Activated CD8-positive, alpha-beta T cell treated with anti-CD3 and anti-CD28 coated beads, Interleukin-2, amount 10 ng/mL, durations not matched to agents 7 days and 5 days (primary cell): ENCODE measurements at regions of chrX and their contacts with region 1.

Region 1: DNA sequence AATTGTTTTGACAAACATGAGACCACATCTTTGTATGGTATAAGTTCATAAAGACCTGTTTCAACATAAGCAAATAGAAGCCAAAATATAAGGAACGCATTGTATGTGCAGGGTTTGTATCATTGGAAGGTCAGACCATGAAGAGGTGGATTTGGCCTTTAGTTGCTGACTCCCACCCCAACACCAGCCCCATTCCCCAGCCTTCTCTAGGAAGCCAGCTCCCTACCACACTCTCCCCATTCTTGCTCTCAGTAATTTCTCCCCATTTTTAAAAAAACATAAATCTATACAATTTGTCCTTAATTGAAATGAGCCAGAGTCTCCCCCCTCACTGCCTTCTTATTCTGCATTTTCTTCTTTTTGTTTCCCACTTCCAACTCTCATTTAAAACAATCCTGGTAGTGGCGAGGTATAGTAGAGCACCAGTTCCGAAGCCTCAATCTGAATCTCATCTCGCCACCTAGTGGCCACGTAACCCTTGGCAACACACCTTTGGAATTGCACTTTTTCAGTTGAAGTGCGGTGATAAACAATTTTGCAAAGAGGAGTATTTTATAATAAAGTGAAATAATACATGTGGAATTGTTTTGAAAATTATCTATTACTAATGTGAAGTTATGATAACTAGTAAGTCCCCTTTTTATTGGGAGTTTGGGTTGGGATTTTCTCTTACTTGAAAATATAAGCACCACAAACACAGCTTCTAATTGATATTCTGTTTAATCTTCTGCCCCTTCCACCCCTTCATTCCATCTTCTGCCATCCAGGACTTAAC is 126.6 kb downstream of the ASB9 start:
- DNase-seq: peak; percentile 68
- ATAC-seq: peak; percentile 85
- H3K4me3 Mint-ChIP-seq: peak overlapping the region; percentile 3
- H3K27ac Mint-ChIP-seq: peak overlapping the region; percentile 90
- H3K4me1 Mint-ChIP-seq: peaks cover 21% of the 10 kb centered on the region
- H3K27me3 Mint-ChIP-seq: no peaks in the 10 kb centered on the region

Region 2: GRCh38 chrX:15107367-15107988 is 35.8 kb before region 1 on chrX:
- CTCF ChIA-PET with region 1: interaction called, 30 read pairs
- POLR2A ChIA-PET with region 1: no interaction called
- DNase-seq: peak; percentile 21
- ATAC-seq: peak; percentile 68
- H3K4me3 Mint-ChIP-seq: no peak overlapping the region
- H3K27ac Mint-ChIP-seq: no peak overlapping the region
- H3K4me1 Mint-ChIP-seq: peaks cover 17% of the 10 kb centered on the region
- H3K27me3 Mint-ChIP-seq: peaks cover 10% of the 10 kb centered on the region

Region 3: DNA sequence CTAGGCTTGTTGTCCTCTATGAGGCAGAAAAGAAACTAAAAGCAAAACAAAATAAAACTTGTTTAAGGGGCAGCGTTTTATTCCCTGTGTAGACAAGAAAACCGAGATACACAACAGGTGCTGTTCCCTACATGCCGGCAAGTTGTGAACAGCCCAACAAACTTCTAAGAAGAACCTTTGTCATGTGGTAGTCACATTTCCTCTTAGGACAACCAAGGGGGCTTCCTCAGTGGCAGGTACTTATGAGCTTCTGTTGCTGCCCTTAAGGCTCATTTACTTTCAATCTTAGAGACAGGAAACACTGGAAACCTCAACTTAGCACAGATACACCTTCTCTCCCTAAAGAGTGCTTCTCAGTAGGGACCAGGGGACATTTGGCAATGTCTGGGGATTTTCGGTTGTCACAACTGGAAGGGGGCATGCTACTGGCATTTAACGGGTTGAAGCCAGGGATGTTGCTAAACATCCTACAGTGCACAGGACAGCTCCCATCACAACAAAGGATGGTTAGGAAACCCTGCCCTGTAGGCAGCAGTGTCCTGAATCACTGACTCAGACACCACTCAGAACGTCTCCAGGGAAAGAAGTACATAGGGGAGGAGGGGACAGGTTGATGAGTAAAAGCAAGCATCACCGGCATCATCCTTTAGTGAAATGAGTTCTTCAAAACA is 15.6 kb after region 1 on chrX:
- CTCF ChIA-PET with region 1: interaction called, 25 read pairs
- POLR2A ChIA-PET with region 1: interaction called, 4 read pairs
- DNase-seq: peak; percentile 56
- ATAC-seq: peak; percentile 92
- H3K4me3 Mint-ChIP-seq: peak overlapping the region; percentile 82
- H3K27ac Mint-ChIP-seq: peak overlapping the region; percentile 94
- H3K4me1 Mint-ChIP-seq: peaks cover 54% of the 10 kb centered on the region
- H3K27me3 Mint-ChIP-seq: no peaks in the 10 kb centered on the region

Region 4: DNA sequence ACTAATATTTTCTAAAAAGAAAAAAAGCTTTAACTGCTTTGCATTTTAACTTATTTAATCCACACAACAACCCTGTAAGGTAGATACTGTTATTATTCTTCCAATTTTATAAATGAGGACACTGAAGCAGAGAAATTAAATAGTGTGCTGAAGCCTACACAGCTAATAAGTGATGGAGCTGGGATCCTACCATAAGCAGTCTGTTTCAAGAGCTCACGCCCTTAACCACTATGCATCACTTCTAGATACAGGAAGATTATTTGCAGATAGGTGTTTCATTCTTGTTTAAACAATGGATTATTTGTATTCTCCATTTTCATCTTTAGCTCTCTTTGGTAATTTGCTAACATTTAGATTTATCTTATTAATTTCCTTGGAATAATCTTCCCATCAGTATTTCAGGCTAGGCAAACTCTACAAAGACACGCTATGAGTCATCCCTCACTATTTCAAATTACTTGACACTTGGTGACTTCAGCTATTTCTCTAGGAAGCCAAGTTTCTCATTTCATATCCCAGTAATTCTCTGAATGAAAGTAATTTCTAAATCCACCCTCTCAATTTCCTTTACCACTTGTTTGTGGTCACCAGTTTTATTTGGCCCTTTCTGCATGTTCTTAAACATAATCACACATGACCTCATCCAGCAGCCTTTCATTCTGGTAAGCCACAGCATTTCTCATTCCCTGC is 59.4 kb after region 1 on chrX:
- CTCF ChIA-PET with region 1: interaction called, 12 read pairs
- POLR2A ChIA-PET with region 1: interaction called, 4 read pairs
- DNase-seq: no peak
- ATAC-seq: peak; percentile 42
- H3K4me3 Mint-ChIP-seq: no peak overlapping the region
- H3K27ac Mint-ChIP-seq: peak overlapping the region; percentile 57
- H3K4me1 Mint-ChIP-seq: peaks cover 36% of the 10 kb centered on the region
- H3K27me3 Mint-ChIP-seq: no peaks in the 10 kb centered on the region

Region 5: DNA sequence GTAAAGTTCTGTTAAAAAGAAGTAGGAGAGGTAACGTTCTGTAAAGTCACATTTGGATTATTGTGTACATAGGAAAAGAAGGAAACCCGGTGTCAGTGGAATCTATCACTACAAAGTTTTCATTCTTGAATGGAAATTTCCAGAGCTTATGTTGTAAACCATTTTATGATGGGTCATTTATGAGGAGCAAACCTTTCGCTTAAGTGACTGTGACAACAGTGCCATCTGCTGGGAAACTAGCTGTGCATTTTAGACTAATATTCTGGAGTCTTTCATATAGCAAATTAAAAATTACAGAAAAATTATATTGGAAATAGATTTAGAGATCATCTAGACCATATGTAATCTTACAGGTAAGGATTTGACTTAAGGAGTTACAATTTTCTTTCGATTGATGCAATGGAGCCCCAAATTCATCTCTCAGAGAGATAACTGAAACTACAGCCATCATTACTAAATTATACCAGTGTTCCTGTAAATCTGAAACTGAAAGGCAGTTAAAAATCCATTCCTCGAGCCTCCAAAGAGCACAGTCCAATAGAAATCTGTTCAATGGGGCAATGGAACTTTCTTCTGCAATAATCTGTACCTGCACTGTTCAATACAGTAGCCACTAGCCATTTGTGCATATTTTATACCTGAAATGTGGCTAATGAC is 99.8 kb after region 1 on chrX:
- CTCF ChIA-PET with region 1: interaction called, 30 read pairs
- POLR2A ChIA-PET with region 1: no interaction called
- DNase-seq: peak; percentile 57
- ATAC-seq: no peak
- H3K4me3 Mint-ChIP-seq: no peak overlapping the region
- H3K27ac Mint-ChIP-seq: no peak overlapping the region
- H3K4me1 Mint-ChIP-seq: peaks cover 3% of the 10 kb centered on the region
- H3K27me3 Mint-ChIP-seq: no peaks in the 10 kb centered on the region